ENCODE measurements at regions of chr4 and their contacts with region 1.

Region 1: DNA sequence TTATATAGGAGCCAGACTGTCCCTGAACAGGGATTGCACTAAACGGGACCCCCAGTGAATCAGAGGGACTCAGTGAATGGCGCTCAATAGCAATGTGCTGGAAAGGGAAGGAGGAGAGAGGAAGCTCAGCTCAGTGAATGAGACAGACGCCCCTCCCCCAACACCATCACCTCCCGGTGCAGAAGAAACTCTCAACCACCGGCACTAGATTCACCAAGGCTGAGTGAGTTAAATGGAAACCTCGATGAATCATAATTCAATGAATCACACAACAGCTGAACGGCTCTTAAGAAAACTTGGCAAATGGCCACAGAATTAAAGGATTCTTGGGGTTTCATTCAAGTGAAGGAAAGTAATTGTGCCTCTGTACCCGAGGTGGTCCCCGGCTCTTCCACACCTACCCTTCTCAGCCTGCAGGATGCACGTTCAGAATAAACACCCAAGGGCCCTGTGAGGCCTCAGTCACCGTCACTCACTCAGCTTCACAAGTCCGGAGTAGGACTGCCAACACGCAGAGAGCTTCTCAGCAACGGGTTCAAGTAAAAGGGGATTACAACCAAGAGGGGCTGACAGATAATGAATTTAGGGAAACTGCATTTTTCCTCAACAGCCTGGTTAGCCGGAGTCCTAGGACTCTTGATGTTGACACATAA is 29.3 kb downstream of the CRMP1 start:
- DNase-seq: no peak
- H3K4me3 ChIP-seq: no peak overlapping the region
- H3K27ac ChIP-seq: no peak overlapping the region
- H3K4me1 ChIP-seq: no peaks in the 10 kb centered on the region
- H3K27me3 ChIP-seq: no peaks in the 10 kb centered on the region
- CTCF ChIP-seq: no peak
- POLR2A ChIP-seq: no peak

Region 2: GRCh38 chr4:5815641-5816040 is 47.9 kb before region 1 on chr4:
- intact Hi-C with region 1: loop called (anchors 1 kb)
- DNase-seq: no peak
- H3K4me3 ChIP-seq: no peak overlapping the region
- H3K27ac ChIP-seq: no peak overlapping the region
- H3K4me1 ChIP-seq: no peaks in the 10 kb centered on the region
- H3K27me3 ChIP-seq: no peaks in the 10 kb centered on the region
- CTCF ChIP-seq: no peak
- POLR2A ChIP-seq: no peak

Measured in vagina (tissue), 2 donors.